ENCODE measurements at regions of chr6 and their contacts with region 1.

Region 1: GRCh38 chr6:111478749-111479148 is 4.3 kb downstream of the REV3L start:
- DNase-seq: peak in 2 of 9 experiments; percentile 54 to 70
- ATAC-seq: no peak
- H3K4me3 ChIP-seq: no peak overlapping the region
- H3K4me3 Mint-ChIP-seq: no peak overlapping the region
- H3K27ac ChIP-seq: no peak overlapping the region
- H3K27ac Mint-ChIP-seq: peak overlapping the region; percentile 47
- H3K4me1 ChIP-seq: peaks cover 14% of the 10 kb centered on the region
- H3K4me1 Mint-ChIP-seq: peaks cover 44% of the 10 kb centered on the region
- H3K27me3 ChIP-seq: no peaks in the 10 kb centered on the region
- H3K27me3 Mint-ChIP-seq: no peaks in the 10 kb centered on the region
- CTCF ChIP-seq: peak; percentile 49

Region 2: GRCh38 chr6:111338843-111339242 is 139.9 kb before region 1 on chr6:
- CTCF ChIA-PET with region 1: no interaction called
- POLR2A ChIA-PET with region 1: no interaction called
- intact Hi-C with region 1: no loop called
- DNase-seq: no peak
- ATAC-seq: no peak
- H3K4me3 ChIP-seq: no peak overlapping the region
- H3K4me3 Mint-ChIP-seq: no peak overlapping the region
- H3K27ac ChIP-seq: no peak overlapping the region
- H3K27ac Mint-ChIP-seq: no peak overlapping the region
- H3K4me1 ChIP-seq: no peaks in the 10 kb centered on the region
- H3K4me1 Mint-ChIP-seq: no peaks in the 10 kb centered on the region
- H3K27me3 ChIP-seq: no peaks in the 10 kb centered on the region
- H3K27me3 Mint-ChIP-seq: no peaks in the 10 kb centered on the region
- CTCF ChIP-seq: no peak

Region 3: GRCh38 chr6:111361648-111362047 is 117.1 kb before region 1 on chr6:
- CTCF ChIA-PET with region 1: interaction called, 7 read pairs
- POLR2A ChIA-PET with region 1: no interaction called
- intact Hi-C with region 1: loop called (anchors 5 kb)
- DNase-seq: peak in 2 of 9 experiments; percentile 6 to 30
- ATAC-seq: no peak
- H3K4me3 ChIP-seq: no peak overlapping the region
- H3K4me3 Mint-ChIP-seq: no peak overlapping the region
- H3K27ac ChIP-seq: no peak overlapping the region
- H3K27ac Mint-ChIP-seq: no peak overlapping the region
- H3K4me1 ChIP-seq: no peaks in the 10 kb centered on the region
- H3K4me1 Mint-ChIP-seq: no peaks in the 10 kb centered on the region
- H3K27me3 ChIP-seq: no peaks in the 10 kb centered on the region
- H3K27me3 Mint-ChIP-seq: no peaks in the 10 kb centered on the region
- CTCF ChIP-seq: no peak

Region 4: DNA sequence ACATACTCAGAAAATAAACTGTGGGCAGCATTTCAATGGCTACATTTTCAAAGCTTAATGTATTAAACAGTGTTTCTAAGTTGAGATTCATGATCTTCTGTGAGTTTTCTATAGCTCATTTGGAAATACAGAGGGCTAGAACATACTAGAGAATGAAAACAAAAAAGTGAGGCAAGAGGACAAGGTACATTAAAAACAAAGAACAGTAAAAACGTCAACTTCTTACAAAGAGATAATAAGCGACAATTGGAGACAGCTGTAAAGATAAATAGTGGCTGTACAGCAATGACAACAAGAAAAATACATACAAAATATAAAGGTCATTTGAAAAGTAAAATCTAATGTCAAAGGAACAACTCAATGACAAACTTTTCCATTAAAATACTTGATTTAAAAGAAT is 90.1 kb before region 1 on chr6:
- CTCF ChIA-PET with region 1: interaction called, 3 read pairs
- POLR2A ChIA-PET with region 1: no interaction called
- intact Hi-C with region 1: loop called in 1 of 2 experiments (anchors 5 kb)
- DNase-seq: no peak
- ATAC-seq: no peak
- H3K4me3 ChIP-seq: no peak overlapping the region
- H3K4me3 Mint-ChIP-seq: no peak overlapping the region
- H3K27ac ChIP-seq: no peak overlapping the region
- H3K27ac Mint-ChIP-seq: peak overlapping the region; percentile 0
- H3K4me1 ChIP-seq: no peaks in the 10 kb centered on the region
- H3K4me1 Mint-ChIP-seq: no peaks in the 10 kb centered on the region
- H3K27me3 ChIP-seq: no peaks in the 10 kb centered on the region
- H3K27me3 Mint-ChIP-seq: no peaks in the 10 kb centered on the region
- CTCF ChIP-seq: no peak